ENCODE measurements at regions of chr1 and their contacts with region 1.

Region 1: GRCh38 chr1:206912445-206913095 is 9.2 kb downstream of the FCMR start:
- H3K4me3 ChIP-seq: no peak overlapping the region
- H3K27ac ChIP-seq: no peak overlapping the region
- H3K4me1 ChIP-seq: no peaks in the 10 kb centered on the region
- CTCF ChIP-seq: peak; percentile 56

Region 2: GRCh38 chr1:206725109-206725963 is 187.2 kb before region 1 on chr1:
- CTCF ChIA-PET with region 1: interaction called, 51 read pairs
- POLR2A ChIA-PET with region 1: no interaction called
- H3K4me3 ChIP-seq: no peak overlapping the region
- H3K27ac ChIP-seq: no peak overlapping the region
- H3K4me1 ChIP-seq: no peaks in the 10 kb centered on the region; the same call in 1 of the 2 replicates
- CTCF ChIP-seq: no peak

Region 3: DNA sequence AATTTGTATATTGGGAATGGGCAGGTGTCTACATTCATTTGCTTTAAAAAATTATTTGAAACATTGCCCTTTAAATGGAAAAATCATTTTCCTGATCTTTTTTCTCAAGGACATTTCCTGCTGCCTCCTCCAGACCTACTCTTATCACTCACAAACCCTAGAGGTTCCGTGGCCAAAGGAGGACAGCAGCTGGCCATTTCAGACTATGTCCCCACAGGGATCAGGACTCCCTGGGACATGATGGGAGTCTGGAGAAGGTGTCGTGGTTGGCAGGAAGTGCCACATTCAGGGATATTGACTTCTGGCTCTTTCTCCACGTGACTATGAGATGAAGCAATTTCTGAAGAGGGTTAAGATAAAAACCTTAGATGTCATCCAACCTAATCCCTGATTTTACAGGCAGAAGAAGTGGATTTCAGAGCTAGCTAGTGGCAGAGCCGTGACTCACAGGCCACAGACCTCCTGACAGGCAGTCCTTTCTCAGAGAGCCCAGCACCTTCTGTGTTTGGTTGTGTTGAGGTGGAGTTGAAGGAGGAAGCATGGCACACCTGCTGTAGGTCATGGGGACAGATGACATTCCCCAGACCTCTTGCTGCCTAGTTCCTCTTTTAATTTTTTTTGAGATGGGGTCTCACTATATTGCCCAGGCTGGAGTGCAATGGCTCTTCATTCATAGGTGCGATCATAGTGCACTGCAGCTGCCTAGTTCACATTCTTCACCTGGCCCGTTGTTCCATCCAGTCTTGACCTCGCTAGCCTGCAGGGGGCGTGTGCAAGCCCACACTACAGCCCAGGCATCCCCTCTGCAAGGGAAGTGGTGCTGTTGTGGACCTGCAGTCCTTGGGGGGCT is 114.8 kb before region 1 on chr1:
- CTCF ChIA-PET with region 1: interaction called, 23 read pairs
- POLR2A ChIA-PET with region 1: no interaction called
- H3K4me3 ChIP-seq: no peak overlapping the region
- H3K27ac ChIP-seq: no peak overlapping the region
- H3K4me1 ChIP-seq: no peaks in the 10 kb centered on the region
- CTCF ChIP-seq: peak; percentile 35; the same call in 1 of the 2 replicates

Region 4: GRCh38 chr1:206814716-206815341 is 97.7 kb before region 1 on chr1:
- CTCF ChIA-PET with region 1: interaction called, 56 read pairs
- POLR2A ChIA-PET with region 1: no interaction called
- H3K4me3 ChIP-seq: no peak overlapping the region
- H3K27ac ChIP-seq: no peak overlapping the region
- H3K4me1 ChIP-seq: no peaks in the 10 kb centered on the region
- CTCF ChIP-seq: no peak

Region 5: GRCh38 chr1:206882519-206882918 is 30.1 kb before region 1 on chr1:
- CTCF ChIA-PET with region 1: interaction called, 10 read pairs
- POLR2A ChIA-PET with region 1: interaction called, 6 read pairs
- H3K4me3 ChIP-seq: no peak overlapping the region
- H3K27ac ChIP-seq: no peak overlapping the region
- H3K4me1 ChIP-seq: no peaks in the 10 kb centered on the region
- CTCF ChIP-seq: no peak

Region 6: DNA sequence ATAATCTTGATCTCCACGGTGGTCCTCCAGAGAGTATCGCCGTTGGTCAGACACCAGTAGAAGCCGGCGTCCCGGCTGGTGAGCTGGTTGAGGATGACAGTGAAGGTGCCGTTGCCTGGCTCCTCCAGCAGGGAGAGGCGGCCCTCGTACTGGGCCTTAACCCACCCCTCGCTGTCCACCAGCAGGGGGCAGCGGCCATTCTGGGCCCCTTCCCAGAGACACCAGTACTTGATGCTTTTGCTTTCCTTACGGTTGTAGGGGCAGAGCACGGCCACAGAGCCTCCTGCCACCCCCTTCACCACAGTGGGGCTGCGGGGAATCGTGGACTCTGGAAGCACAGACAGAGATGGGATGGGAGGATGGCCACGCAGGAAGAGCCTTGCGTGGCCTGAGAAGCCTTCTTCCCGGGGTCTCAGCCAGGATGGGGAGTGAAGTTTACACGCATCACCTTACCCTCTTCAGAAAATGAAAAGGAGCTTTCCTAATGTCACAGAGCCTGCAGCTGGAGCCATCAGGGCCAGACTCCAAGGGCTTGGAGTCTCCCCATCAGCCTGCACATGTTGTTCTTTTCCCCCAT is 23.0 kb after region 1 on chr1:
- CTCF ChIA-PET with region 1: interaction called, 15 read pairs
- POLR2A ChIA-PET with region 1: no interaction called
- H3K4me3 ChIP-seq: no peak overlapping the region
- H3K27ac ChIP-seq: no peak overlapping the region
- H3K4me1 ChIP-seq: no peaks in the 10 kb centered on the region
- CTCF ChIP-seq: peak; percentile 51; the same call in 1 of the 2 replicates

Region 7: GRCh38 chr1:207077470-207078377 is 165.2 kb after region 1 on chr1:
- CTCF ChIA-PET with region 1: interaction called, 10 read pairs
- POLR2A ChIA-PET with region 1: no interaction called
- H3K4me3 ChIP-seq: no peak overlapping the region
- H3K27ac ChIP-seq: no peak overlapping the region
- H3K4me1 ChIP-seq: no peaks in the 10 kb centered on the region
- CTCF ChIP-seq: peak; percentile 68; the same call in 1 of the 2 replicates

Region 8: GRCh38 chr1:207115269-207115668 is 202.7 kb after region 1 on chr1:
- CTCF ChIA-PET with region 1: no interaction called
- POLR2A ChIA-PET with region 1: no interaction called
- H3K4me3 ChIP-seq: no peak overlapping the region
- H3K27ac ChIP-seq: no peak overlapping the region
- H3K4me1 ChIP-seq: no peaks in the 10 kb centered on the region
- CTCF ChIP-seq: no peak